Mammary epithelial cell (primary cell): ENCODE measurements at regions of chr14 and their contacts with region 1.

Region 1: DNA sequence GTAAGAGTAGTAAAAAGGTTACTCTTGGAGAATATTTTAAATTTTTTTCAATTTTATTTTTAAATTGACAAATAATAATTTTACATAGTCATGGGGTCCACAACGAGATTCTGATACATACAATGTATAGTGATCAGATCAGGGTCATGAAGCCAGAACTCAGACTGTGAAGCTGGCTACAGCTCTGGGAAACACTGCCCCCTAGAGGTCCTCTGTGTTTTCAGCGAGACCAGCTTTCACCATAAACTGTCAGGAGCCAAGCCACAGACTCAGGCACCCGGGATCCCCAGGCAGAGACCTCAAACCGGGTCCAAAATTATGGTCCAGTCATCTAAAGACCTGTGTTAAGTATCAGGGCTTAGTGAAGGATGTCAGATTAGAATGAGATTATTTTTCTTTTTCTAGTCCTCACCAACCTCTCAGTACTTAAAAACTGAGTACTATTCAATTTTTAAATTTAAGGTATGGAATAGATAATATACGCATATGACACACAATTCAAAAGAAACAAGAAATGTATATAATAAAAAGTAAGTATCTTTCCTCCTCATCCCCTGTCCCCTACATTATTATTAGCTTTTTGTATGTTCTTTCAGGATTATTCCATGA is 397.1 kb downstream of the MDGA2 start:
- DNase-seq: peak; percentile 1
- H3K4me3 ChIP-seq: no peak overlapping the region
- H3K27ac ChIP-seq: no peak overlapping the region
- H3K4me1 ChIP-seq: no peaks in the 10 kb centered on the region
- H3K27me3 ChIP-seq: no peaks in the 10 kb centered on the region
- CTCF ChIP-seq: peak; percentile 17 to 43

Region 2: GRCh38 chr14:46581036-46581671 is 697.2 kb before region 1 on chr14:
- CTCF ChIA-PET with region 1: no interaction called
- dilution Hi-C with region 1: no loop called
- in situ Hi-C with region 1: no loop called
- intact Hi-C with region 1: loop called (anchors 10 kb)
- DNase-seq: peak; percentile 6
- H3K4me3 ChIP-seq: no peak overlapping the region
- H3K27ac ChIP-seq: no peak overlapping the region
- H3K4me1 ChIP-seq: no peaks in the 10 kb centered on the region
- H3K27me3 ChIP-seq: no peaks in the 10 kb centered on the region
- CTCF ChIP-seq: peak; percentile 43 to 46

Region 3: DNA sequence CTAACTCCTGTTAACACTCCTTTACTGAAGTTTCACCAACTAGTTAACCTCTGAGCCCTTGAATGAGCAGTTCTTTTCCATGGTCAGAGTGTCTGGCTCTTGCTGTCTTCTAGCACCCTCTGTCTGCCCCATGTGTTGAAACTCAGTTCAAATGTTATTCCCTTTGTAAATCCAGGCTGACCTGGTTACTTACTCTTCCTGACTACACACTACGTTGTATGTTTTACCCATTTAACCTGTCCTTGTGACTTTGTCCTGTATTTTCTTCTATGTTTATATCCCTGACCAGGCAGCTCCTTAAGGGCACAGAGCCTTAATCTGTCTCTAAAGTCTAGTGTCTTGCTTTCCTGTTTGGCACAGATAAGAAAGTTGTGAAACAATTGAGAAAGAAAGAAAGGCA is 237.8 kb before region 1 on chr14:
- CTCF ChIA-PET with region 1: no interaction called
- dilution Hi-C with region 1: no loop called
- in situ Hi-C with region 1: no loop called
- intact Hi-C with region 1: loop called (anchors 1 kb)
- DNase-seq: peak; percentile 38
- H3K4me3 ChIP-seq: no peak overlapping the region
- H3K27ac ChIP-seq: no peak overlapping the region
- H3K4me1 ChIP-seq: no peaks in the 10 kb centered on the region
- H3K27me3 ChIP-seq: no peaks in the 10 kb centered on the region
- CTCF ChIP-seq: peak in 1 of 2 donors; percentile 44

Region 4: GRCh38 chr14:47194055-47194454 is 84.3 kb before region 1 on chr14:
- CTCF ChIA-PET with region 1: no interaction called
- dilution Hi-C with region 1: no loop called
- in situ Hi-C with region 1: no loop called
- intact Hi-C with region 1: no loop called
- DNase-seq: no peak
- H3K4me3 ChIP-seq: no peak overlapping the region
- H3K27ac ChIP-seq: no peak overlapping the region
- H3K4me1 ChIP-seq: no peaks in the 10 kb centered on the region
- H3K27me3 ChIP-seq: no peaks in the 10 kb centered on the region
- CTCF ChIP-seq: no peak